RWPE1 (cell line): ENCODE measurements at regions of chr5 and their contacts with region 1.

Region 1: GRCh38 chr5:97162045-97162444 is 19.6 kb upstream of the LIX1 start:
- DNase-seq: peak; percentile 66
- H3K27ac ChIP-seq: no peak overlapping the region
- CTCF ChIP-seq: peak; percentile 97

Region 2: GRCh38 chr5:96868603-96869371 is 293.3 kb before region 1 on chr5:
- CTCF ChIA-PET with region 1: interaction called, 15 read pairs
- POLR2A ChIA-PET with region 1: no interaction called
- DNase-seq: peak; percentile 68
- H3K27ac ChIP-seq: no peak overlapping the region
- CTCF ChIP-seq: peak; percentile 94